A549 (cell line): ENCODE measurements at regions of chr20 and their contacts with region 1.

Region 1: GRCh38 chr20:24992487-24993205 is at the start of gene APMAP:
- DNase-seq: peak; percentile 94 to 97
- ATAC-seq: peak; percentile 88 to 96
- H3K4me3 ChIP-seq: peak within 1 kb of the TSS; percentile 85
- H3K27ac ChIP-seq: peak within 1 kb of the TSS; percentile 86 to 95
- H3K4me1 ChIP-seq: peaks cover 40% of the 10 kb centered on the region
- CTCF ChIP-seq: no peak
- EP300 ChIP-seq: no peak
- POLR2A ChIP-seq: peak; percentile 97
- RAD21 ChIP-seq: no peak
- polyA plus RNA-seq, gene APMAP: 113 and 118 TPM in 2 replicates

Region 2: GRCh38 chr20:24608926-24609667 is 383.5 kb before region 1 on chr20:
- CTCF ChIA-PET with region 1: no interaction called
- POLR2A ChIA-PET with region 1: no interaction called
- DNase-seq: no peak
- ATAC-seq: no peak
- H3K4me3 ChIP-seq: no peak overlapping the region
- H3K27ac ChIP-seq: no peak overlapping the region
- H3K4me1 ChIP-seq: peaks cover 5% of the 10 kb centered on the region; the same call in 1 of the 3 replicates
- CTCF ChIP-seq: no peak
- EP300 ChIP-seq: no peak
- POLR2A ChIP-seq: no peak
- RAD21 ChIP-seq: no peak

Region 3: DNA sequence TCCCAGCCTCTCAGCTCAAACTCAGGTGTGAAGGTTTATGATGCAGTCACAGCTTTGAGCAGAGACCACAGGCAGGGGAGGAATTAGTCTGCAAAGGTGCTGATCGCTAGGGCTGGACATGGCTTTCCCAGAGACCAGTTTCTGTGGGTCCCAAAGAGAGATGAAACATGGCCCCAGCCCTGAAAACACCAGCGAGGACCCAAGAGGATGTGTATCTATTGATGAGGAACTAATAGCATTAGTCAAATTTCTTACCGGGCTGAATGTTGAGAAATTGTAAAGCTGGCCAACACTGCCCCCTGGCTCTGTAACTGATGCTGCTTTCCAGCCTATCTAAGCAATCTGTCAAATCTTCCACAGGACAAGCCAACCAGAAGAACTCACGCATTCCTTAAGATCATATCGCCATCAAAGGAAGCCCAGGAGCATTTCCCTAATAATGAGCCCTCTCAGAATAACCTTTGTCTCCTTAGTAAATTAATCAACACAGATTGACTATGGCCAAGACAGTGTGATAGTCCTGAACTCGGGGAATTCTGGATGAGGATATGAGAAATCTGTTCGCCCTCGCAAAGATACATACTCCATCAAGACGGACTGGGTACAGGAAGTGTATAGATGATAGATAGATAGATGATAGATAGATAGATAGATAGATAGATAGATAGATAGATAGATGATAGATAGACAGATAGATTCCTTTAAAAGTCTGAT is 73.1 kb after region 1 on chr20:
- CTCF ChIA-PET with region 1: interaction called, 130 read pairs
- POLR2A ChIA-PET with region 1: interaction called, 7 read pairs
- DNase-seq: peak; percentile 71 to 76
- ATAC-seq: peak; percentile 84 to 90
- H3K4me3 ChIP-seq: no peak overlapping the region
- H3K27ac ChIP-seq: no peak overlapping the region
- H3K4me1 ChIP-seq: peaks cover 13% of the 10 kb centered on the region; the same call in 2 of the 3 replicates
- CTCF ChIP-seq: peak; percentile 82
- EP300 ChIP-seq: no peak
- POLR2A ChIP-seq: no peak
- RAD21 ChIP-seq: peak; percentile 88 to 90

Region 4: DNA sequence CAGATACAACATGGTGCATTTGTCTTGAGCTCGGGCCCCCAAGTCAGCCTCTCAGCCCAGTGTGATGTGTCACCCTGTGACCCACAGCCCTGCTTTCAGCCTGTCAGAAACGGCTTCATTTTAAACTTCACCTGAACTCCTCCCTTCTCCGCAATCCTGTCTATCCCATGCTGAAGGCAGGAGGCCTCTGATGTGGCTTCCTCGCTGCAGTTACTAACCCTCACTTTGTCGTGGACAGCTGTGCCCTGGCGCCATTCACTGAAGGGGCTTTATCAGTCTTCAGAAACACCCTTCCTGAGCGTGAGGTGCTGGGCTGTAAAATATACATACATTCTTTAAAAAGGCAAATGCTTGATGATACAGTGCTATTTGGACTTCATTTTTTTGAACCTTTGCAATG is 195.0 kb after region 1 on chr20:
- CTCF ChIA-PET with region 1: interaction called, 39 read pairs
- POLR2A ChIA-PET with region 1: no interaction called
- DNase-seq: no peak
- ATAC-seq: no peak
- H3K4me3 ChIP-seq: no peak overlapping the region
- H3K27ac ChIP-seq: no peak overlapping the region
- H3K4me1 ChIP-seq: no peaks in the 10 kb centered on the region
- CTCF ChIP-seq: no peak
- EP300 ChIP-seq: no peak
- POLR2A ChIP-seq: no peak
- RAD21 ChIP-seq: no peak

Region 5: GRCh38 chr20:25247956-25248785 is 255.5 kb after region 1 on chr20 and contains the start of gene PYGB:
- CTCF ChIA-PET with region 1: interaction called, 55 read pairs
- POLR2A ChIA-PET with region 1: interaction called, 3 read pairs
- DNase-seq: peak; percentile 89 to 94
- ATAC-seq: peak; percentile 68 to 80
- H3K4me3 ChIP-seq: peak within 1 kb of the TSS; percentile 82
- H3K27ac ChIP-seq: peak within 1 kb of the TSS; percentile 92 to 96
- H3K4me1 ChIP-seq: peaks cover 57% of the 10 kb centered on the region
- CTCF ChIP-seq: no peak
- EP300 ChIP-seq: no peak
- POLR2A ChIP-seq: peak; percentile 98
- RAD21 ChIP-seq: peak in 1 of 2 experiments; percentile 20; a peak in 3 of 5 replicates
- polyA plus RNA-seq, gene PYGB: 100 and 113 TPM in 2 replicates

Region 6: GRCh38 chr20:25294459-25295385 is 302.1 kb after region 1 on chr20:
- CTCF ChIA-PET with region 1: interaction called, 42 read pairs
- POLR2A ChIA-PET with region 1: no interaction called
- DNase-seq: peak; percentile 76 to 88
- ATAC-seq: peak; percentile 57 to 85
- H3K4me3 ChIP-seq: no peak overlapping the region
- H3K27ac ChIP-seq: peak overlapping the region in 1 of 2 experiments; percentile 79; a peak in 4 of 6 replicates
- H3K4me1 ChIP-seq: peaks cover 48% of the 10 kb centered on the region
- CTCF ChIP-seq: peak; percentile 96
- EP300 ChIP-seq: no peak
- POLR2A ChIP-seq: no peak
- RAD21 ChIP-seq: peak; percentile 85 to 89

Region 7: GRCh38 chr20:25399037-25399430 is 406.4 kb after region 1 on chr20:
- CTCF ChIA-PET with region 1: interaction called, 112 read pairs
- POLR2A ChIA-PET with region 1: interaction called, 3 read pairs
- DNase-seq: peak; percentile 77 to 81
- ATAC-seq: peak; percentile 99
- H3K4me3 ChIP-seq: no peak overlapping the region
- H3K27ac ChIP-seq: peak overlapping the region; percentile 46; a peak in 5 of 6 replicates
- H3K4me1 ChIP-seq: peaks cover 18% of the 10 kb centered on the region
- CTCF ChIP-seq: peak; percentile 90
- EP300 ChIP-seq: no peak
- POLR2A ChIP-seq: no peak
- RAD21 ChIP-seq: peak; percentile 94 to 95